Endothelial cell of umbilical vein (primary cell): ENCODE measurements at regions of chr6 and their contacts with region 1.

Region 1: GRCh38 chr6:16761471-16762267 is 409 bp upstream of the ATXN1 start:
- DNase-seq: peak; percentile 89
- H3K4me3 ChIP-seq: peak overlapping the region; percentile 76 to 86 (median 78)
- H3K27ac ChIP-seq: peak overlapping the region; percentile 88
- H3K4me1 ChIP-seq: peaks cover 43% of the 10 kb centered on the region
- H3K27me3 ChIP-seq: no peaks in the 10 kb centered on the region
- CTCF ChIP-seq: peak; percentile 23 to 33
- POLR2A ChIP-seq: no peak

Region 2: GRCh38 chr6:15987569-15987968 is 774.1 kb before region 1 on chr6:
- CTCF ChIA-PET with region 1: no interaction called
- POLR2A ChIA-PET with region 1: no interaction called
- dilution Hi-C with region 1: no loop called
- intact Hi-C with region 1: no loop called
- DNase-seq: no peak
- H3K4me3 ChIP-seq: no peak overlapping the region
- H3K27ac ChIP-seq: no peak overlapping the region
- H3K4me1 ChIP-seq: no peaks in the 10 kb centered on the region
- H3K27me3 ChIP-seq: no peaks in the 10 kb centered on the region
- CTCF ChIP-seq: no peak
- POLR2A ChIP-seq: no peak

Region 3: DNA sequence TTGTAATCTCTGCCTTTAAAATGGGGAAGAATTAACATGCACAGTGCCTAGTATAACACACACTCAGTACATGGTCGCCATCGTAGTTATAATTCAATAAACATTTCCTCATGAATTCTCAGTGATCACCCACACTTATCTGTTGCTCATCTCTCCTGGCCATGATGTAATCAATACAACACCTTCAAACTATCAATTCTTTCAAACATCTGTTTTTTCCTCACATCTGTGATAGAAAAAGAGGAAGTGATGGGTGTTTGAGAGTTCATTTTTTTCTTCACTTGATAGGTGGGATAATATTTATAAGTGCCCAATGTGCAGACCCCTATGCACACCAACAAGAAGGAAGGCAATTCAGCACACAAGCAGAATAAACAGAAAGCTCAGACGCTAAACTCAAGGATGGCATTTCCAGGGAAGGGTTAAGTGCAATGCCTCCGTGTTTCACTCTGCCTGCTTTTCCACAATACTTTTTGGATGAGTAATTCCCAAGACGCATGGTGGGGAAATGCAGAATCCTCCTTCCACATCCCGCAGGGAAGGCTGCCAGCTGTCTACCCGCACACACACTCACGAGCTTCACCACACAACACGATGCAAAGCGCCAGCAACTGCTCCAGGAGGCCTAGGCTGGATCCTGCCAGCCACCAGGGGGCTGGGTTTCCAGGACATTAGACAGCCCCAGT is 422.9 kb before region 1 on chr6:
- CTCF ChIA-PET with region 1: interaction called, 55 read pairs
- POLR2A ChIA-PET with region 1: interaction called, 4 read pairs
- dilution Hi-C with region 1: no loop called
- intact Hi-C with region 1: loop called (anchors 1 kb)
- DNase-seq: peak; percentile 98
- H3K4me3 ChIP-seq: no peak overlapping the region
- H3K27ac ChIP-seq: peak overlapping the region; percentile 79
- H3K4me1 ChIP-seq: peaks cover 33% of the 10 kb centered on the region
- H3K27me3 ChIP-seq: no peaks in the 10 kb centered on the region
- CTCF ChIP-seq: peak; percentile 81 to 84
- POLR2A ChIP-seq: peak; percentile 29

Region 4: GRCh38 chr6:16669227-16669626 is 92.4 kb before region 1 on chr6:
- CTCF ChIA-PET with region 1: interaction called, 5 read pairs
- POLR2A ChIA-PET with region 1: no interaction called
- dilution Hi-C with region 1: no loop called
- intact Hi-C with region 1: loop called (anchors 1 kb)
- DNase-seq: peak; percentile 94
- H3K4me3 ChIP-seq: no peak overlapping the region
- H3K27ac ChIP-seq: peak overlapping the region; percentile 69
- H3K4me1 ChIP-seq: peaks cover 17% of the 10 kb centered on the region
- H3K27me3 ChIP-seq: no peaks in the 10 kb centered on the region
- CTCF ChIP-seq: no peak
- POLR2A ChIP-seq: no peak

Region 5: GRCh38 chr6:16712931-16713484 is 48.7 kb before region 1 on chr6:
- CTCF ChIA-PET with region 1: interaction called, 36 read pairs
- POLR2A ChIA-PET with region 1: interaction called, 8 read pairs
- dilution Hi-C with region 1: no loop called
- intact Hi-C with region 1: loop called (anchors 1 kb)
- DNase-seq: peak; percentile 94
- H3K4me3 ChIP-seq: peak overlapping the region in 2 of 3 experiments; percentile 8 to 29
- H3K27ac ChIP-seq: peak overlapping the region; percentile 92
- H3K4me1 ChIP-seq: peaks cover 31% of the 10 kb centered on the region
- H3K27me3 ChIP-seq: no peaks in the 10 kb centered on the region
- CTCF ChIP-seq: peak; percentile 35 to 51
- POLR2A ChIP-seq: no peak

Region 6: GRCh38 chr6:16964553-16965501 is 203.2 kb after region 1 on chr6:
- CTCF ChIA-PET with region 1: interaction called, 47 read pairs
- POLR2A ChIA-PET with region 1: no interaction called
- dilution Hi-C with region 1: no loop called
- intact Hi-C with region 1: loop called (anchors 1 kb)
- DNase-seq: peak; percentile 66
- H3K4me3 ChIP-seq: no peak overlapping the region
- H3K27ac ChIP-seq: no peak overlapping the region
- H3K4me1 ChIP-seq: peaks cover 11% of the 10 kb centered on the region
- H3K27me3 ChIP-seq: peaks cover 0 to 2% of the 10 kb centered on the region in 2 experiments
- CTCF ChIP-seq: peak; percentile 94 to 97
- POLR2A ChIP-seq: no peak